Vagina (tissue), 2 donors: ENCODE measurements at regions of chr9 and their contacts with region 1.

Region 1: GRCh38 chr9:83538172-83538889 is at the start of gene FRMD3:
- DNase-seq: no peak
- H3K4me3 ChIP-seq: peak within 1 kb of the TSS; percentile 50 to 63
- H3K27ac ChIP-seq: peak within 1 kb of the TSS; percentile 15
- H3K4me1 ChIP-seq: peaks cover 19% of the 10 kb centered on the region
- H3K27me3 ChIP-seq: no peaks in the 10 kb centered on the region
- CTCF ChIP-seq: peak; percentile 11 to 36 (median 35)
- POLR2A ChIP-seq: no peak
- total RNA-seq, gene FRMD3: 13.8 TPM

Region 2: DNA sequence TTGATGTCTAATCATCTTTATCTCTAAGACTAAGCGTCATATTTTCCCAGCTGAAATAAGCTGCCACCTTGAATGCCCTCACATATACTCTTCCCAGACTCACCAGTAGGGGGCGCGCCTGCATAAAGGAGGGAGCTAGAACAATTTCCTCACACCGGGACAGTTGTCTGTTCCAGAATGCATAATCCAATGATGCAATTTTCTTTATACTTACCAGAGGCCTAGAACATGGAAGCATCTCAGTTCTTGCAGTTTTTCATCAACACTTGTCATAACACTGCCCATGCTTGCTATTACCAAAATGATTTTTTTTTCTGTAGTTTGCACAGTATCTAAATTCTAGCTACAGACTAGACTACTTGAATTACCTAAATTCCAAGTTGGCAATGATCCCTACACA is 204.0 kb before region 1 on chr9:
- intact Hi-C with region 1: loop called (anchors 10 kb)
- DNase-seq: no peak
- H3K4me3 ChIP-seq: no peak overlapping the region
- H3K27ac ChIP-seq: no peak overlapping the region
- H3K4me1 ChIP-seq: no peaks in the 10 kb centered on the region
- H3K27me3 ChIP-seq: no peaks in the 10 kb centered on the region
- CTCF ChIP-seq: peak; percentile 76 to 83 (median 80)
- POLR2A ChIP-seq: no peak

Region 3: DNA sequence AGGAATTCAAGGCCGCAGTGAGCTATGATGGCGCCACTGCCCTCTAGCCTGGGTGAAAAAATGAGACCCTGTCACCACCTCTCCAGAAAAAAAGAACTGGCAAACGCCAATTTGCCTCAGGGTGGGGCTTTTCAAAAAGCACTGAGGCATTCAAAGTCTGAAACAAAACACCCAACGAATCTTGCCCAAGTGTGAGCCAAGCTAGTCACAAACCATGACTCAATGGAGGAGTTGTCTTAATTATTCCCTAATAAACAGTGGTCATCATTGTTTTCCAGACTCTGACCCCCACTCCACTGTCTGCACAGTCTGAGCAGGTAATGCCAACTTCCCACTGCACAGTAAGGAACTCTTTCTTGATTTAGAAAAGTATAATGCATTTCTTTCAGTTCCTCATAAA is 16.9 kb before region 1 on chr9:
- intact Hi-C with region 1: no loop called
- DNase-seq: no peak
- H3K4me3 ChIP-seq: no peak overlapping the region
- H3K27ac ChIP-seq: no peak overlapping the region
- H3K4me1 ChIP-seq: no peaks in the 10 kb centered on the region
- H3K27me3 ChIP-seq: no peaks in the 10 kb centered on the region
- CTCF ChIP-seq: no peak
- POLR2A ChIP-seq: no peak